Esophagus muscularis mucosa (tissue), 4 donors: ENCODE measurements at regions of chr22 and their contacts with region 1.

Region 1: GRCh38 chr22:27195094-27195493 is 537.7 kb downstream of the MIAT start:
- DNase-seq: no peak
- H3K4me3 ChIP-seq: no peak overlapping the region
- H3K27ac ChIP-seq: peak overlapping the region; percentile 63 to 79 (median 70)
- H3K4me1 ChIP-seq: peaks cover 0 to 22% (median 18%) of the 10 kb centered on the region in 4 donors
- H3K27me3 ChIP-seq: no peaks in the 10 kb centered on the region
- CTCF ChIP-seq: peak in 1 of 3 experiments; percentile 18
- EP300 ChIP-seq: peak; percentile 31
- POLR2A ChIP-seq: no peak

Region 2: DNA sequence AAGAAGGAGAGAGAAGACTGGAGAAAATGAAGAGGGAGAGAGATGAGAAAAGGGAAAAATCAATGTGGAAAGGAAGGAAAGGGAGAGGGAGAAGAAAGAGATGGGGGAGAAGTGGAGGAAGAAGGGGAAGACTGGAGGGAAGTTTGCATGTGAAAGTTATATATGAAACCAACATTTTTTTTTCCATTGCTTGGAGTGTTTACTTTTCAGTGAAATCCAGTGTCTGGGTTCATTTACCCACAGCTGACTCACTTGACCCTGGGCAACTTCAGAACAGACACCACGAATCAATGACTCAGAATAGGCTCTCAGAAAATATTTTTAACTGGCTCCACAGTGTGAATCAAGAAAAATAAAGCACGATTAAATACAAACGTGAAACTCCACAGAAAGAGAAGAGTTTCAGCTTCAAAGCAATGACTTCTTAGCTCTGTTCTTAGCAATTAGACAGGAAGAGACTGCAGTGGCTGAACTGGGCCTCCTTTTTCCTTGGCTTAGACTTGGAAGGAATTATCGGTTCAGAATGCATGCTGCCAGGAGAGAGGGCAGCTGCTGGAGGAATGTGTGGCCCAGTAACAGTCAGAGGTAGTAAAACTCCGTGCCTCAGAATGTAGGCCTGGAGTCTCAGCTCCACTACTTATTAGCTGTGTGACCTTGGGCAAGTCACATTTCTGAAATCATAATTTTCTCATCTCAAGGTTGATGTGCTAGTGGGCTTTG is 300.2 kb before region 1 on chr22:
- intact Hi-C with region 1: loop called (anchors 10 kb)
- DNase-seq: peak; percentile 68
- H3K4me3 ChIP-seq: no peak overlapping the region
- H3K27ac ChIP-seq: peak overlapping the region; percentile 74 to 83 (median 81)
- H3K4me1 ChIP-seq: peaks cover 5 to 45% (median 43%) of the 10 kb centered on the region in 4 donors
- H3K27me3 ChIP-seq: no peaks in the 10 kb centered on the region
- CTCF ChIP-seq: no peak
- EP300 ChIP-seq: no peak
- POLR2A ChIP-seq: no peak

Region 3: GRCh38 chr22:27274770-27275449 is 79.8 kb after region 1 on chr22:
- intact Hi-C with region 1: no loop called
- DNase-seq: no peak
- H3K4me3 ChIP-seq: no peak overlapping the region
- H3K27ac ChIP-seq: no peak overlapping the region
- H3K4me1 ChIP-seq: peaks cover 0 to 11% (median 9%) of the 10 kb centered on the region in 4 donors
- H3K27me3 ChIP-seq: no peaks in the 10 kb centered on the region
- CTCF ChIP-seq: no peak
- EP300 ChIP-seq: no peak
- POLR2A ChIP-seq: no peak